ENCODE measurements at regions of chrX and their contacts with region 1.

Region 1: DNA sequence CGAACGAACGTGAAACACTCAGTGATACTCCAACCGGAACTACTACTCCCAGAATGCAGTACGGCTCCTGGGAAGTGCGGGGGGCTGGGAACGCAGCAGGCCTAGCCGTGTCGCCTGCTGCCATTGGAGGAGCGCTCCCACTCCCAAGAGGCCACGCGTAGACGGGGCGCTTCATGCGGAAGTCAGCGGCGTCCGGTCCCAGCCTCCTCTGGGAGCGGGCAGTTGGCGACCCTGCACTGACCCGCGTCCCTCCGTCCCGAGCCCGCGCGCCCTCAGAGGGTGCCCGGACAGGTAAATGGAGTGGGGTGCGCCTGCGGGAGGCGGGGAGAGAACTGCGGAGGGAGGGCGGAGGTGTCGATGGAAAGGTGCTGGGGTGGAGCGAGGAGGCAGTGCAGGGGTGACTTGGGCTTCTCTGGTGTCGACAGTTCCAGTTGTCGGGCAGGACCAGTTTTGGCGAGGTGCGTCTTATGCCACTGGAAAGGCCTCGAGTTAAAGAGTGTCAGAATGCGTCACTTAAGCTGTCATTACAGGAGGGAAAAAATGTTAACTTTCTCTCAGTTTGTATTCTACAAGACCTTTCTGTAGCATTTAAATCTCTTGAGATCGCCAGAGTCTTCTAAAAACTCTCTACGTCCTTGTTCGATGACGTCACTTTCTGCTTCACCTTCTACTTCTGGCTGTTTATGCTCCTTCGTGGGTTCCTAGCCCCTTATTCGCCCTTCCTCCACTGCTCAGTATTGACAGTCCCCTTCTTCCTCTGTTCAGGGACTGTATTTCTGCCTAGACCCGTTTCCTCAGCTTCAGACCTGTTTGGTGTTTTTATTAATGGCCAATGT is at the start of gene VAMP7:
- DNase-seq: peak; percentile 95
- H3K4me3 ChIP-seq: peak within 1 kb of the TSS; percentile 58 to 83 (median 69)
- H3K27ac ChIP-seq: peak within 1 kb of the TSS; percentile 63 to 83 (median 80)
- H3K4me1 ChIP-seq: peaks cover 0 to 11% (median 8%) of the 10 kb centered on the region in 4 donors
- H3K27me3 ChIP-seq: no peaks in the 10 kb centered on the region
- CTCF ChIP-seq: no peak
- EP300 ChIP-seq: no peak
- POLR2A ChIP-seq: peak; percentile 30
- total RNA-seq, gene VAMP7: 25.6 to 29.7 (median 28.4) TPM

Region 2: DNA sequence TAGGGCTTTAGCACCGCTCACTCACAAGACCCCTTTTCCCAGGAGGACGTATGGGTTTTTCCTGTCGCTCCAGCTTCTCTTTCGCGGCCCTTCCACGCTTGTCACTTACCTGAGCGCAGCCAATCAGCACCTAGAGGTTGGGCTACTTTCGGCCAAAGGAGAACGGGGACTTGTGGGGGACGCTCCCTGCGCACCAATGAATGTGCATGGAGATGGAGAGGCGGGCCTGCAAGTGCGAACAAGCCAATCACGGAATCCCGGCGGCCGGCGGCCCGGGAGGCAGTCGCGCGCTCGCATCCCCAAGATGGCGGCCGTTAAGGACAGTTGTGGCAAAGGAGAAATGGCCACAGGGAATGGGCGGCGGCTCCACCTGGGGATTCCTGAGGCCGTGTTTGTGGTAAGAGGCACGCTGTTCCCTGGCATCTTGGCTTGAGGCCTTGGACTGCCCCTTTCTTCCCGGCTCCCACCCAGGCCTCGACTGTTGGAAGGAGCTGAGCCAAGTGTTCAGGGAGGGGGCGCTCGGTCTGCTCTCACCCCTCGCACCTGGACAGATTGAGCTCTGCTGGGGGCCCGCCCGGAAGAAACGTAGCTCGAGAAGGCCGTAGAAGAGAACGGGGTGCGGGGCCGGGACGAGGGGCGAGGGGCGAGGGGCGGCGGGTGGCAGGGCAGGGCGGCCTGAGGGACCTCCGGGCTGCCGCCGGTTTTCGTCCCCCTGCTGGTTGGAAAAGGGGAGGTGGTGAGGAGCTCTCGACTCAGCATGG is 665.0 kb before region 1 on chrX and contains the start of gene VBP1:
- intact Hi-C with region 1: loop called (anchors 5 kb)
- DNase-seq: peak; percentile 95
- H3K4me3 ChIP-seq: peak within 1 kb of the TSS; percentile 65 to 83 (median 76)
- H3K27ac ChIP-seq: peak within 1 kb of the TSS; percentile 88 to 93 (median 91)
- H3K4me1 ChIP-seq: peaks cover 14 to 24% (median 21%) of the 10 kb centered on the region in 4 donors
- H3K27me3 ChIP-seq: no peaks in the 10 kb centered on the region
- CTCF ChIP-seq: peak in 2 of 3 experiments; percentile 35 to 58
- EP300 ChIP-seq: no peak
- POLR2A ChIP-seq: no peak
- total RNA-seq, gene VBP1: 26.5 to 41.5 (median 37.7) TPM

Region 3: DNA sequence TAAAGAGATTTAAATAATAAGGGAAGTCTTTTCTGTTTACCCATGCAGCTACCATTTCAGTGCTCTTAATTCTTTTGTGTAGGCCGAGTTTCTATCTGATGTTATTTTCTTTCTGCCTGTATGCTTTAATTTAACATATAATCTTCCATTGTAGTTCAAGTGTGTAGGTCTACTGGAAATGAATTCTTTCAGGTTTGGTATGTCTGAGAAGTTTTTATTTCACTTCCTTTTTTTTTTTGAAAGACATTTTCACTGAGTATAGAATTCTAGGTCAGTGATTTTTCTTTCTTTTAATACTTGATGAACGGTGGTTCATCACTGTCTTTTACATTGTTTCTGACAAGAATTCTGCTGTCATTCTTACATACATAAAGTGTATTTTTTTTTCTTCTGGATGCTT is 41.8 kb after region 1 on chrX:
- intact Hi-C with region 1: no loop called
- DNase-seq: no peak
- H3K4me3 ChIP-seq: no peak overlapping the region
- H3K27ac ChIP-seq: no peak overlapping the region
- H3K4me1 ChIP-seq: no peaks in the 10 kb centered on the region
- H3K27me3 ChIP-seq: no peaks in the 10 kb centered on the region
- CTCF ChIP-seq: no peak
- EP300 ChIP-seq: no peak
- POLR2A ChIP-seq: no peak

Region 4: GRCh38 chrX:155938132-155938531 is 56.8 kb after region 1 on chrX:
- intact Hi-C with region 1: no loop called
- DNase-seq: no peak
- H3K4me3 ChIP-seq: no peak overlapping the region
- H3K27ac ChIP-seq: no peak overlapping the region
- H3K4me1 ChIP-seq: no peaks in the 10 kb centered on the region
- H3K27me3 ChIP-seq: no peaks in the 10 kb centered on the region
- CTCF ChIP-seq: no peak
- EP300 ChIP-seq: no peak
- POLR2A ChIP-seq: no peak

Measured in esophagus muscularis mucosa (tissue), 4 donors.